ENCODE measurements at regions of chr2 and their contacts with region 1.

Region 1: GRCh38 chr2:178914259-178914849 is 107.1 kb upstream of the TTN start:
- DNase-seq: no peak
- H3K4me3 ChIP-seq: no peak overlapping the region
- H3K27ac ChIP-seq: no peak overlapping the region
- H3K4me1 ChIP-seq: peaks cover 0 to 3% (median 0%) of the 10 kb centered on the region in 4 donors
- H3K27me3 ChIP-seq: no peaks in the 10 kb centered on the region
- CTCF ChIP-seq: peak; percentile 69 to 85 (median 80)
- EP300 ChIP-seq: no peak
- POLR2A ChIP-seq: no peak

Region 2: GRCh38 chr2:178796079-178796677 is 118.2 kb before region 1 on chr2:
- intact Hi-C with region 1: loop called (anchors 2 kb)
- DNase-seq: no peak
- H3K4me3 ChIP-seq: no peak overlapping the region
- H3K27ac ChIP-seq: no peak overlapping the region
- H3K4me1 ChIP-seq: no peaks in the 10 kb centered on the region
- H3K27me3 ChIP-seq: no peaks in the 10 kb centered on the region
- CTCF ChIP-seq: peak; percentile 51 to 65 (median 62)
- EP300 ChIP-seq: no peak
- POLR2A ChIP-seq: no peak

Region 3: GRCh38 chr2:178870703-178871102 is 43.7 kb before region 1 on chr2:
- intact Hi-C with region 1: no loop called
- DNase-seq: no peak
- H3K4me3 ChIP-seq: no peak overlapping the region
- H3K27ac ChIP-seq: no peak overlapping the region
- H3K4me1 ChIP-seq: peaks cover 0 to 5% (median 0%) of the 10 kb centered on the region in 4 donors
- H3K27me3 ChIP-seq: no peaks in the 10 kb centered on the region
- CTCF ChIP-seq: no peak
- EP300 ChIP-seq: no peak
- POLR2A ChIP-seq: no peak

Region 4: GRCh38 chr2:179129574-179130238 is 215.4 kb after region 1 on chr2:
- intact Hi-C with region 1: loop called (anchors 10 kb)
- DNase-seq: no peak
- H3K4me3 ChIP-seq: no peak overlapping the region
- H3K27ac ChIP-seq: no peak overlapping the region
- H3K4me1 ChIP-seq: no peaks in the 10 kb centered on the region
- H3K27me3 ChIP-seq: no peaks in the 10 kb centered on the region
- CTCF ChIP-seq: peak; percentile 31 to 63 (median 41)
- EP300 ChIP-seq: no peak
- POLR2A ChIP-seq: no peak